GM12878 (cell line): ENCODE measurements at regions of chr19 and their contacts with region 1.

Region 1: GRCh38 chr19:38618590-38619360 is at the start of gene EIF3K:
- DNase-seq: peak; percentile 97
- ATAC-seq: peak; percentile 62
- H3K4me3 ChIP-seq: peak within 1 kb of the TSS; percentile 98
- H3K27ac ChIP-seq: peak within 1 kb of the TSS; percentile 98
- H3K4me1 ChIP-seq: peaks cover 12% of the 10 kb centered on the region
- H3K27me3 ChIP-seq: no peaks in the 10 kb centered on the region
- CTCF ChIP-seq: no peak
- EP300 ChIP-seq: no peak
- POLR2A ChIP-seq: peak; percentile 98
- RAD21 ChIP-seq: no peak
- polyA plus RNA-seq, gene EIF3K: 715 to 863 TPM

Region 2: GRCh38 chr19:38524369-38524768 is 94.4 kb before region 1 on chr19:
- CTCF ChIA-PET with region 1: no interaction called
- POLR2A ChIA-PET with region 1: no interaction called
- RAD21 ChIA-PET with region 1: no interaction called
- SMC1A ChIA-PET with region 1: no interaction called
- in situ Hi-C with region 1: no loop called
- intact Hi-C with region 1: no loop called
- DNase-seq: no peak
- ATAC-seq: no peak
- H3K4me3 ChIP-seq: no peak overlapping the region
- H3K27ac ChIP-seq: no peak overlapping the region
- H3K4me1 ChIP-seq: no peaks in the 10 kb centered on the region
- H3K27me3 ChIP-seq: no peaks in the 10 kb centered on the region
- CTCF ChIP-seq: no peak
- EP300 ChIP-seq: no peak
- POLR2A ChIP-seq: no peak
- RAD21 ChIP-seq: no peak

Region 3: GRCh38 chr19:38544034-38544958 is 74.5 kb before region 1 on chr19:
- CTCF ChIA-PET with region 1: interaction called, 25 read pairs
- POLR2A ChIA-PET with region 1: interaction called, 11 read pairs
- RAD21 ChIA-PET with region 1: interaction called, 24 read pairs
- SMC1A ChIA-PET with region 1: interaction called, 46 read pairs
- in situ Hi-C with region 1: no loop called
- intact Hi-C with region 1: loop called (anchors 2 kb)
- DNase-seq: peak; percentile 64
- ATAC-seq: peak; percentile 93
- H3K4me3 ChIP-seq: peak overlapping the region; percentile 25; the same call in 1 of the 2 replicates
- H3K27ac ChIP-seq: no peak overlapping the region
- H3K4me1 ChIP-seq: peaks cover 9% of the 10 kb centered on the region; the same call in 1 of the 2 replicates
- H3K27me3 ChIP-seq: no peaks in the 10 kb centered on the region
- CTCF ChIP-seq: peak; percentile 52 to 81 (median 69); a peak in 5 of 6 replicates
- EP300 ChIP-seq: no peak
- POLR2A ChIP-seq: no peak
- RAD21 ChIP-seq: peak; percentile 91

Region 4: DNA sequence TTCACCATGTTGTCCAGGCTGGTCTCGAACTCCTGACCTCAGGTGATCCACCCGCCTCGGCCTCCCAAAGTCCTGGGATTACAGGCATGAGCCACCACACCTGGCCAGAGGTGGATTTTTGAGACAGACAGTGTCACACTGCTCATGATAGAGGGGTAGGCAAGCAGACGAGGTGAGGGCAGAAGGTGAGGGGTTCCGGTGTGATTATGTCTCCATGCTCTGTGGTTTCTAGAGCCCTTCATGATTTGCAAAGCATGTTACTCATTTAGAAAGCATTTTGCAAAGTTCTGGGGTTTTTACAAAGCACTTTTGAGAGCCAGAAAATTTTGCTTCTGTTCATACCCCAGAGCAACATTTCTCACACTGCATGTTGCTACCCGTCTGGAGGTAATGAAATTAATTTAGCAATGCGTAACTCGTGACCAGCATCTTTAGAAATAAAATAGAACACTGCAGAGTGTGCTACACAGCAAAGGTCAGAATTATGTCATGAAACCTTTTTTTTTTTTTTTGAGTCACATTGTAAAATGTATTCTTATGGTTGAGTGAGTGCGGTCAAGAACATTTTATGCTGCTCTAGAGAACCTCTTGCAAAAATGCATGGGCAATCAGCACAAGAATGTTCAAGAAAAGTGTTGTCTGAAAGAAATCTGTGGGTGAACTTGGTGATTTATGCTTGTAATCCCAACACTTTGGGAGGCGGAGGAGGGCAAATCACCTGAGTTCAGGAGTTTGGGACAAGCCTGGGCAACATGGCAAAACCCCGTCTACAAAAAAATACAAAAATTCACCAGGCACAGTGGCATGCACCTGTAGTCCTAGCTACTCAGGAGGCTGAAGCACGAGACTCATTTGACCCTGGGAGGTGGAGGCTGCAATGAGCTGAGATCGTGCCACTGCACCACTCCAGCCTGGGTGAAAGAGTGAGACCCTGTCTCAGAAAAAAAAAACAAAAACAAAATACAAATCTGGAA is 59.1 kb before region 1 on chr19:
- CTCF ChIA-PET with region 1: interaction called, 60 read pairs
- POLR2A ChIA-PET with region 1: interaction called, 135 read pairs
- RAD21 ChIA-PET with region 1: interaction called, 135 read pairs
- SMC1A ChIA-PET with region 1: interaction called, 85 read pairs
- in situ Hi-C with region 1: loop called (anchors 5 kb)
- intact Hi-C with region 1: loop called (anchors 1 kb)
- DNase-seq: peak; percentile 99
- ATAC-seq: peak; percentile 81
- H3K4me3 ChIP-seq: no peak overlapping the region; the same call in 1 of the 2 replicates
- H3K27ac ChIP-seq: peak overlapping the region; percentile 70
- H3K4me1 ChIP-seq: peaks cover 53% of the 10 kb centered on the region
- H3K27me3 ChIP-seq: 0 out of 4 replicates have a peak, but pooled peaks cover 0 to under 1% of the 10 kb centered on the region in 2 experiments
- CTCF ChIP-seq: no peak
- EP300 ChIP-seq: peak; percentile 94 to 96
- POLR2A ChIP-seq: no peak
- RAD21 ChIP-seq: peak; percentile 19; the same call in 1 of the 2 replicates

Region 5: GRCh38 chr19:38606131-38606530 is 12.6 kb before region 1 on chr19:
- CTCF ChIA-PET with region 1: interaction called, 5 read pairs
- POLR2A ChIA-PET with region 1: interaction called, 15 read pairs
- RAD21 ChIA-PET with region 1: interaction called, 3 read pairs
- SMC1A ChIA-PET with region 1: no interaction called
- in situ Hi-C with region 1: no loop called
- intact Hi-C with region 1: no loop called
- DNase-seq: no peak
- ATAC-seq: no peak
- H3K4me3 ChIP-seq: no peak overlapping the region
- H3K27ac ChIP-seq: no peak overlapping the region
- H3K4me1 ChIP-seq: no peaks in the 10 kb centered on the region
- H3K27me3 ChIP-seq: no peaks in the 10 kb centered on the region
- CTCF ChIP-seq: no peak
- EP300 ChIP-seq: no peak
- POLR2A ChIP-seq: no peak
- RAD21 ChIP-seq: no peak

Region 6: GRCh38 chr19:38647368-38647965 is 28.7 kb after region 1 on chr19 and contains the start of gene ACTN4:
- CTCF ChIA-PET with region 1: interaction called, 4 read pairs
- POLR2A ChIA-PET with region 1: interaction called, 26 read pairs
- RAD21 ChIA-PET with region 1: interaction called, 21 read pairs
- SMC1A ChIA-PET with region 1: interaction called, 10 read pairs
- in situ Hi-C with region 1: no loop called
- intact Hi-C with region 1: no loop called
- DNase-seq: peak; percentile 78
- ATAC-seq: peak; percentile 91
- H3K4me3 ChIP-seq: peak within 1 kb of the TSS; percentile 100
- H3K27ac ChIP-seq: peak within 1 kb of the TSS; percentile 79
- H3K4me1 ChIP-seq: peaks cover 13% of the 10 kb centered on the region
- H3K27me3 ChIP-seq: no peaks in the 10 kb centered on the region
- CTCF ChIP-seq: no peak
- EP300 ChIP-seq: no peak
- POLR2A ChIP-seq: peak; percentile 99
- RAD21 ChIP-seq: no peak
- polyA plus RNA-seq, gene ACTN4: 2.4 to 6.7 TPM